Right ventricle myocardium inferior (tissue), 1 donor: ENCODE measurements at regions of chr13 and their contacts with region 1.

Region 1: GRCh38 chr13:111216166-111216960 is 101.3 kb downstream of the ARHGEF7 start:
- DNase-seq: no peak
- ATAC-seq: peak; percentile 71

Region 2: DNA sequence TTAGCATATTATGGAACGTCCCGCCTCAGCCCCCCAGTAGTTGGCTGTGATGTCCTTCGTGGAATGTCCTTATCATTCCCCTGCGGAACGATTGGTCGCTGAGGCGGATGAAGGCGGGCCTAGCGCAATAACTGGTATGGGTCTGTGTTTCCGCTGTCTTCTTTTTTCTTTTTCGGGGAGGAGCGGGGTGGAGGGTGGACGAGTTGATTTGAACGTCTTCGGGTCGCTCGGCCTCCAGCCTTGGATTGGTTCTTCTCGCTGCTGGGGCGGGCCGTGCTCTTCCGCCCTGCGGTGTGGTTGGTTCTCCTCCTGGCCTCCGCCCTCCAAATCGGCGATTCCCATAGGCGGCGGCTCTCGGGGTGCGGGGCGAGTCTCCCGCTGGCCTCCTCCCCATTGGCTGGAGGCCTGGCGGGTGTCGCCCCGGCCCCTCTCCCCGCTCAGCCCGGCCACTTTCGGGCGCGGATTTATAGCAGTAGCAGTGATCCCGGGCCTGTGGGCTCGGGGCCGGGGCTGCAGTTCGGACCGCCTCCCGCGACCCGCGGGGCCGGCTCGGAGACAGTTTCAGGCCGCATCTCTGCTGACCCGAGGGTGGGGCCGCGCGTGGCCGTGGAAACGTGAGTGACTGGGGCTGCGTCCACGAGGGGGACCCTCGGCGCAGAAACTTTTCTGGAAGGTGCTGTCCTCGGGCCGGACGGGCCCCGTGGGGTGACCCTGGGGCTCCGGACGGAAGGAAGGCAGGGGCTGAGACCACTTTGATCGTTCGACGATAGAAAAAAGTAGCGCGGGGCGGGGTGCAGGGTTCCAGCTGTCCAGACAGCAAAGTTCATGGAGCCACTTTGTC is 500.7 kb before region 1 on chr13:
- intact Hi-C with region 1: loop called (anchors 10 kb)
- DNase-seq: peak; percentile 99
- ATAC-seq: peak; percentile 78

Region 3: DNA sequence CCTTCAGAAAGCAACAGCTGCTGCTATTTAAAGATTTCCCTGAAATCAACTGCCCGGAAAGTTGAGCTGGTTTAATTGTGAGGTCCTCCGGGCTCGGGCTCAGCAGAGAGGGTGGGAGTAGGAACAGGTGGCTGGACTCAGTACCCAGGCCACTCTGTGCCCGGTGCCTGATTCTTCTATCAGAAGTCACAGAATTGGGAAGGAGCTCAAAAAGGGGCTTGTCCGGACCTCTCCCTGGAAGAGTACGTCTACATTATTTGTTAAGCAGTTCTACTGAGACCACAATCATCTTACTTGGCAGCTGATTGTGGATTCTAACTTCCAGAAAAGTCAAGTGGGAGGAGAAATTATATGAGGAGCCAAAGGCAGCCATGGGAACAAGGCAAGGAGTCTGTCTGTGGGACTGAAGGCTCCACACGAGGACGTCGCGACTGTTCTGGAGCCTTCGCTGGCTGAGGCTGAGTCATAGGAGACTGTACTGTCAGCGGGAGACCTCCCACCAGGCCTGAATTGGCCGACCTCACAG is 209.8 kb before region 1 on chr13:
- intact Hi-C with region 1: no loop called
- DNase-seq: peak; percentile 91
- ATAC-seq: peak; percentile 99

Region 4: GRCh38 chr13:111066544-111066943 is 149.8 kb before region 1 on chr13:
- intact Hi-C with region 1: loop called (anchors 2 kb)
- DNase-seq: no peak
- ATAC-seq: peak; percentile 74

Region 5: GRCh38 chr13:111114362-111115060 is 101.9 kb before region 1 on chr13:
- intact Hi-C with region 1: loop called (anchors 5 kb)
- DNase-seq: peak; percentile 80
- ATAC-seq: peak; percentile 66

Region 6: DNA sequence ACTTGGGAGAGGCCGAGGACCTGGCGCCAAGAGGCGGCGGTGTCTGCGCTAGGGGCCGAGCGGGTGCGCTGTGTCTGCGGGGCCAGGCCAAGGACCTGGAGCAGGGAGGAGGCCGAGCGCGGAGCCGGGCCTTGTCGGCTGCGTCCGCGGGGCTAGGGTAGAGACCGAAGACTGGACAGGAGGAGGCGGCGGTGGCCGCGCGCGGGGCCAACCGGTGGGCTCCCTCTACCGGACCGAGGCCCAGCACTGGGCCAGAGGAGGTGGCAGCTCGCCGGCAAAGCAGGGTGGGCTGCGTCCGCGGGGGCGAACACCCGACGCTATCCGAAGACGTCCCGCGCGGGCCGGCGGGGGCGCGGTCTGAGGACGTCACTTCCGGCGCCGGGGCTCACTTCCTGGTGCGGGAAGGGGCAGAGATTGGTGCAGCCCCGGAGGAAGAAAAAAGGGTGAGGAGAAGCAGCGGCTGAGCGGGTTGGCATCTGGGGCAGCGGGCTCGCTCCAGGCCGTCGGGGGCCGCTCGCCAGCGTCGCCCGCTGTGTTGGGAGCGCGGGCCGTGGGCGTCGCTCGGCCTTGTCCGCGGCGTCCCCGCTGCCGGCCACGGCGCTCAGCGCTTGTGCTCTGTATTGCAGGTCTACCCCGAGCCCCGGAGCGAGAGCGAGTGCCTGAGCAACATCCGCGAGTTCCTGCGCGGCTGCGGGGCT is 62.9 kb before region 1 on chr13:
- intact Hi-C with region 1: loop called (anchors 2 kb)
- DNase-seq: peak; percentile 94
- ATAC-seq: peak; percentile 97